ENCODE measurements at regions of chr12 and their contacts with region 1.

Region 1: DNA sequence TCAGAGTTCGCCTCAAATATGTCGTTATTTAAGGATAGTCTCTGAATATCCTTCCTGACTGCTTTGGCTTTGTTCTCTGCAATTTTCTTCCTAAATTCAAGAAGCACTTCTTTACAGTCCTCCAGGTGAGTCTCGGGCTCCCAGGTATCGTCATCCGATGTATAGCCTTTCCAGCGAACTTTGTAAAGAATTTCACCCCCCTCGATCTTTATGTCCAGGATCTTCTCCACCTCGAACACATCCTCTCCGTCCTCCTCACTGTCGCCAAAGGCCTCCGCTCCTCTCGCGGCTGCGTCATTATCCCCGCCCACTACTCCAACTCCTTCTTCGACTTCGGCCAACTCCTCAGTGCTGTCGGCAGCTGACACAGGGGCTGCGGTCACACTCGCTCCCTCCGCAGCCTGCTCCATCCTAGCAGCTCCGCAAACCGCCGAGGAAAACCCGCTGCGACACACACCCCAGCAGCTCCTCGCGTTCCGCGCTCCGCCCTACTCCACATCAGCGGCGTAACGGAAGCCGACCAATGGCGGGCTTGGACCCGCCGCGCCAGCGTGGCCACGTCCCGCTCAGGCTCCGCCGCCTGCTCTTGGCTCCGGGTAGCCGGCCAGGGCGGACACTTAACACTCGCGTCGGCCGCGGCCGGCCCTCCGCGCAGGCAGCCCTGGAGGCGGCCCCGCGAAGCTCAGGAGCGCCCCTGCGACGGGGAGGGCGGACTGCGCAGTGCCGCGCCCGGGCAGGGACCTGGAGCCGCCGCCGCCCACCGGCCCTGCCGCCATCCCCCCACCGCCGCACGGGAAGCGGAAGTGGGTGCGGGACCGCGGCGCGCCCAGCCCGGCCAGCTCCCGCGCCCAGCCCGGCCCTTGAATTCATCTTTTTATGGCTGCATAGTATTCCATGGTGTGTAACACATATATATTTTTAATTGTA is 4.1 kb downstream of the CD163L1 start:
- DNase-seq: peak; percentile 65
- H3K4me3 ChIP-seq: peak overlapping the region; percentile 23 to 45 (median 40)
- H3K27ac ChIP-seq: peak overlapping the region; percentile 59
- H3K4me1 ChIP-seq: peaks cover 19% of the 10 kb centered on the region
- H3K27me3 ChIP-seq: no peaks in the 10 kb centered on the region
- CTCF ChIP-seq: peak in 1 of 2 donors; percentile 9
- POLR2A ChIP-seq: no peak

Region 2: GRCh38 chr12:5996459-5996858 is 1443.4 kb before region 1 on chr12:
- CTCF ChIA-PET with region 1: no interaction called
- POLR2A ChIA-PET with region 1: no interaction called
- dilution Hi-C with region 1: no loop called
- intact Hi-C with region 1: loop called (anchors 10 kb)
- DNase-seq: peak; percentile 36
- H3K4me3 ChIP-seq: no peak overlapping the region
- H3K27ac ChIP-seq: no peak overlapping the region
- H3K4me1 ChIP-seq: no peaks in the 10 kb centered on the region
- H3K27me3 ChIP-seq: no peaks in the 10 kb centered on the region
- CTCF ChIP-seq: no peak
- POLR2A ChIP-seq: no peak

Measured in endothelial cell of umbilical vein (primary cell).